ENCODE measurements at regions of chr9 and their contacts with region 1.

Region 1: DNA sequence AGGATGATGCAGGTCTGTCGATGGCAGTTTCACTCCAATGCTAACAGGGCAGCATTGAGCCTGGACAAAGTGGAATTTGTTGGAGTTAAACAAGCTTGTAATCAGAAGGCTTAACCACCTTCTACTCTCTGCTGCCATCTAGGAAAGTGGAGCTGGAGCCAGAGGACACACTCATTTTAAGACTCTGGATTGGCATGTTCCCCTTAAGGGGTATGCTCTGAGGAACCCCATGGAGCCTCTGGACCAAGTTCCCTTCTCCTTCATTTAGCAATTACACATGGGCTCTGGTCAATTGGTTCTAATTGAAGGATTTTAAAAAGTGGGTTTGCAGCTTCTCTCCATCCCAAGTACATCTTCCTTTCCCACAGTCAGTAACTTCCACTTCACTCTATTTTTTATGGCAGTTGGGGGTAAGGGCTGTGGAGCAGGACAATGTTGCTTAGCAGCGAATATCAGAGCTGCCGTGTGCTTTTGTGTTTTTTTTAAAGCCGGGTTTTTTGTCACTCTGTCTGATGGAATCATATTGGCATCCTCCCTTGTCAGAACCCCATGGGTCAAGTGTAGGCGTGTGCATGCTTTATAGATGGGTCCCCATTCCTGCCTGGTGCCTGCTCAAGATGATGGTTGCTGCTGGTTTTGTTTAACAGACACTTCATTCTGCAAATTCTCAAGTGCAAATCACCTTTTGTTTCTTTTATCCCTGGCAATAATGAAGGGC is 330.8 kb upstream of the ADAMTSL1 start:
- DNase-seq: no peak
- ATAC-seq: no peak
- H3K4me3 ChIP-seq: no peak overlapping the region
- H3K27ac ChIP-seq: no peak overlapping the region
- H3K4me1 ChIP-seq: peaks cover 2 to 10% of the 10 kb centered on the region in 2 donors
- H3K27me3 ChIP-seq: no peaks in the 10 kb centered on the region

Region 2: DNA sequence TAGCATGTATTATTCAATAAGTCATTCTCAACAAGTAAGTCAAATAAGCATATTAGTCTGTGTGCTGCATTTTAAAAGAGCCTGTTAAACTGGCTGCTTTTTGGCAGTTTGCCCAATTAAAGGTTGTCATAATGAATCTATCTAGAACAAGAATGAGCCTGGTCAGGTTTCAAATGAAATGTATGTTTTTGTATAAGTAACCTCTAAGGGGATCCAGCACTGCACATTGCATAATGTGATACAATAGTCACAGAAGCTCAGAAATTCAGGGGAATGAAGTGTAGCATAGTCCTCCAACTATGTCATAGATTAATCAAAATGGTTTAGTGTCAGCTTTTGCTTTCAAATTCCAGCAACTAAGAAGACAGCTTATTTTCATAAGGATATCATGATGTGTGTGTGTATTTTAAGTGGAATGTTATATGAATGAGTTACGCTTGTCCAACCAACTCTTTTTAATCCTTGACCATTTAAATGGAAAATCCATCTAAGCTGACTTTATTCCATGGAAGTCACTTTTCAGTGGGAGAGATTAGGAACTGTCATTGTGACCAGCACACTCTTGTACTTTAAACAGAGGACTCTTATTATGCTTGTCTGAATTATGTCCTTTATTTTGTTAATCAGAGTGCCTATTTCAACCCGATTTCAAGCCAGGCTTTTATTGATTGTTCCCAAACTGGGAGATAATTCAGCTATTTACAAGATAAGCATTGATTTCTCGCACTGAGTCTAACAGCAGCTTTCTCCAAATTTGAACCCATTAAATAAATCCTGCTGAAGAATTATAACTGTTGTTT is 46.9 kb after region 1 on chr9:
- intact Hi-C with region 1: loop called in 1 of 2 experiments (anchors 10 kb)
- DNase-seq: no peak
- ATAC-seq: no peak
- H3K4me3 ChIP-seq: no peak overlapping the region
- H3K27ac ChIP-seq: no peak overlapping the region
- H3K4me1 ChIP-seq: peaks cover 4 to 6% of the 10 kb centered on the region in 2 donors
- H3K27me3 ChIP-seq: no peaks in the 10 kb centered on the region

Measured in aorta (tissue), 5 donors.